ENCODE measurements at regions of chr4 and their contacts with region 1.

Region 1: GRCh38 chr4:73573794-73574406 is 46.3 kb downstream of the RASSF6 start:
- DNase-seq: peak; percentile 37
- H3K4me3 ChIP-seq: peak overlapping the region in 1 of 2 experiments; percentile 46; a peak in 1 of 4 replicates
- H3K27ac ChIP-seq: no peak overlapping the region
- H3K4me1 ChIP-seq: no peaks in the 10 kb centered on the region
- H3K27me3 ChIP-seq: peaks cover 7% of the 10 kb centered on the region
- CTCF ChIP-seq: peak; percentile 76
- EP300 ChIP-seq: no peak
- RAD21 ChIP-seq: peak; percentile 69

Region 2: GRCh38 chr4:73224886-73225285 is 349.0 kb before region 1 on chr4:
- CTCF ChIA-PET with region 1: no interaction called
- POLR2A ChIA-PET with region 1: no interaction called
- DNase-seq: no peak
- H3K4me3 ChIP-seq: no peak overlapping the region
- H3K27ac ChIP-seq: peak overlapping the region; percentile 0 to 40; a peak in 3 of 4 replicates
- H3K4me1 ChIP-seq: peaks cover 11 to 13% of the 10 kb centered on the region in 2 experiments
- H3K27me3 ChIP-seq: no peaks in the 10 kb centered on the region
- CTCF ChIP-seq: no peak
- EP300 ChIP-seq: no peak
- RAD21 ChIP-seq: no peak

Region 3: DNA sequence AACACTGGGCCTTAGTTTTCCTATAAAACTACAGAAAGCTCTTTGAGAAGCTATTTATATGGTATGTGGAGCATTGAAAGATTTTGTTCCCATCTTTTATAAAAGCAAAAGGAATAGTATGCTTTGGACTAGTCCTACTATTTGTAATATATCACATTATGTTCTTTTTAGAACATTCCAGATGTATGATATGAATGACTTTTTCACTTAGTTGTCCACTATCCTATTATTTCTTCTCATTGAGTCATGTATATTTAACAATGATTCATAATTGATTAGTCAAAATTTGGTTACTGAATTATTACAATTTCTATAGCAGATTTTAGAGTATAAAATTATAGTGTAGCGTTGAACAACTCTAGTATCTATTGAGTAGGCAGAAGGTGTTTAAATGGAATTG is 12.1 kb after region 1 on chr4:
- CTCF ChIA-PET with region 1: interaction called, 12 read pairs
- POLR2A ChIA-PET with region 1: no interaction called
- DNase-seq: no peak
- H3K4me3 ChIP-seq: no peak overlapping the region
- H3K27ac ChIP-seq: no peak overlapping the region
- H3K4me1 ChIP-seq: no peaks in the 10 kb centered on the region; a peak in 1 of 4 replicates
- H3K27me3 ChIP-seq: peaks cover 7% of the 10 kb centered on the region; the same call in 1 of the 2 replicates
- CTCF ChIP-seq: no peak
- EP300 ChIP-seq: no peak
- RAD21 ChIP-seq: no peak

Region 4: DNA sequence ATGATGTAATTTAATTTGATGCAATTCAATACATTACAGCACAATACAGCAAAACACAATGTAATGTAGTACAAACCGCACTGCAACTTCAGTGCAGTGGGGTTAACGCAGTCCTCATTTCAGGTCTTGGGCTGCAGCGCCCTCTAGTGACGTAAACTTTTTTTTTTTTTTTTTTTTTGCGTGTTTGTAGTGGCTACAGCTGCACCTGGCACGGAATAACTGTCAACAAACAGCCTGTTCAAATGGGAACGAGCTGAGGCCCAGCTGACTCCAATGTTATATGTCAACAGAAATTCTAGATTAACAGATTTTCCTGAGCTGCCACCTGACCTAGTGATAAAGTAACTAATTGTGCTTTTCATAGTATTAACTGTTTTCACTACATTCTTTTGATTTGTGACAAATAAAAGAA is 79.8 kb after region 1 on chr4:
- CTCF ChIA-PET with region 1: interaction called, 16 read pairs
- POLR2A ChIA-PET with region 1: no interaction called
- DNase-seq: peak; percentile 38
- H3K4me3 ChIP-seq: no peak overlapping the region
- H3K27ac ChIP-seq: no peak overlapping the region
- H3K4me1 ChIP-seq: no peaks in the 10 kb centered on the region
- H3K27me3 ChIP-seq: peaks cover 36% of the 10 kb centered on the region; the same call in 1 of the 2 replicates
- CTCF ChIP-seq: peak; percentile 71
- EP300 ChIP-seq: no peak
- RAD21 ChIP-seq: peak; percentile 76

Region 5: GRCh38 chr4:73964862-73965611 is 391.1 kb after region 1 on chr4:
- CTCF ChIA-PET with region 1: no interaction called
- POLR2A ChIA-PET with region 1: no interaction called
- DNase-seq: no peak
- H3K4me3 ChIP-seq: no peak overlapping the region
- H3K27ac ChIP-seq: no peak overlapping the region
- H3K4me1 ChIP-seq: no peaks in the 10 kb centered on the region
- H3K27me3 ChIP-seq: no peaks in the 10 kb centered on the region
- CTCF ChIP-seq: peak; percentile 32; the same call in 1 of the 2 replicates
- EP300 ChIP-seq: no peak
- RAD21 ChIP-seq: no peak

Region 6: GRCh38 chr4:74244049-74244448 is 670.1 kb after region 1 on chr4:
- CTCF ChIA-PET with region 1: no interaction called
- POLR2A ChIA-PET with region 1: no interaction called
- DNase-seq: no peak
- H3K4me3 ChIP-seq: no peak overlapping the region
- H3K27ac ChIP-seq: no peak overlapping the region
- H3K4me1 ChIP-seq: no peaks in the 10 kb centered on the region
- H3K27me3 ChIP-seq: no peaks in the 10 kb centered on the region
- CTCF ChIP-seq: no peak
- EP300 ChIP-seq: no peak
- RAD21 ChIP-seq: no peak

Measured in SK-N-SH (cell line).